Body of pancreas (tissue), 4 donors: ENCODE measurements at regions of chr7 and their contacts with region 1.

Region 1: DNA sequence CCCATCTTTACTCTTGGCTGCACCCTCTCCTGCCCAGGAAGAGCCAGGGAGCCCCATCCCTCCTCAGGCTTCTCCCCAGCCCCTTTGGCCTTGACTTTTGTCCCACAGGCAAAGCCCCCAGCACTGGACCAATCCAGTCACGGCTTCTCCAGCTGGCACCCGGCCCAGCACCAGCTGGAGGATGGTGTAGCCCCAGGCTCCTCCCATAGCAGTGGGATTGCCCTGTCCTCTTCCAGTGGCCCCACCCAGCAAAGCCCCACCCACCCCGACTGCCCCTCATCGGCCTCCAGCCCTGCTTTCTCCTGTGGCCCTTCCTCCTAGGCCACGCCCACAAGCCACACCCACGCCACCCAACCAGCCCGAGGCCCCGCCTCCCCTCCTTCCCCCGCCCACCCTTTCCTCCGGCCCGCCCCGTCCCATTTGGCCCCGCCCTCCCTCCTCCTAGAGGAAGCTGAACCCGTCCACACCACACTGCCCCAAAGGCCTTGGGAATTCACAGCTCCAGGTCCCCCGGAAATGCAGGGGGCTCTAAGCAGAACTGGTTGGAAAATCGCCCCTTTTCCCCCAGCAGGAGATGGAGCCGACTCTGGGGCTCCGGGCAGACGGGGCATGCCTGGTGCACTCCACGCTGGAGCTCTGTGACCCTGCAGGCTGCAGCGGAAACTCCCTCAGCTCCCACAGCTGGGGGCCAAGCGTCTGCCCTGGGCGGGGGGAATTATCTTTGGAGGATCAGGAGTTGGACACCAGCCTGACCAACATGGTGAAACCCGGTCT is 25.2 kb downstream of the GET4 start:
- DNase-seq: peak; percentile 64 to 89 (median 82)
- ATAC-seq: peak; percentile 49
- H3K4me3 ChIP-seq: no peak overlapping the region
- H3K27ac ChIP-seq: peak overlapping the region in 1 of 4 donors; percentile 34
- H3K4me1 ChIP-seq: peaks cover 9% of the 10 kb centered on the region
- H3K27me3 ChIP-seq: no peaks in the 10 kb centered on the region
- CTCF ChIP-seq: no peak
- POLR2A ChIP-seq: no peak

Region 2: GRCh38 chr7:867672-868486 is 33.7 kb before region 1 on chr7:
- intact Hi-C with region 1: no loop called
- DNase-seq: no peak
- ATAC-seq: peak; percentile 16
- H3K4me3 ChIP-seq: no peak overlapping the region
- H3K27ac ChIP-seq: peak overlapping the region in 3 of 4 donors; percentile 6 to 38 (median 25)
- H3K4me1 ChIP-seq: no peaks in the 10 kb centered on the region
- H3K27me3 ChIP-seq: no peaks in the 10 kb centered on the region
- CTCF ChIP-seq: no peak
- POLR2A ChIP-seq: no peak

Region 3: DNA sequence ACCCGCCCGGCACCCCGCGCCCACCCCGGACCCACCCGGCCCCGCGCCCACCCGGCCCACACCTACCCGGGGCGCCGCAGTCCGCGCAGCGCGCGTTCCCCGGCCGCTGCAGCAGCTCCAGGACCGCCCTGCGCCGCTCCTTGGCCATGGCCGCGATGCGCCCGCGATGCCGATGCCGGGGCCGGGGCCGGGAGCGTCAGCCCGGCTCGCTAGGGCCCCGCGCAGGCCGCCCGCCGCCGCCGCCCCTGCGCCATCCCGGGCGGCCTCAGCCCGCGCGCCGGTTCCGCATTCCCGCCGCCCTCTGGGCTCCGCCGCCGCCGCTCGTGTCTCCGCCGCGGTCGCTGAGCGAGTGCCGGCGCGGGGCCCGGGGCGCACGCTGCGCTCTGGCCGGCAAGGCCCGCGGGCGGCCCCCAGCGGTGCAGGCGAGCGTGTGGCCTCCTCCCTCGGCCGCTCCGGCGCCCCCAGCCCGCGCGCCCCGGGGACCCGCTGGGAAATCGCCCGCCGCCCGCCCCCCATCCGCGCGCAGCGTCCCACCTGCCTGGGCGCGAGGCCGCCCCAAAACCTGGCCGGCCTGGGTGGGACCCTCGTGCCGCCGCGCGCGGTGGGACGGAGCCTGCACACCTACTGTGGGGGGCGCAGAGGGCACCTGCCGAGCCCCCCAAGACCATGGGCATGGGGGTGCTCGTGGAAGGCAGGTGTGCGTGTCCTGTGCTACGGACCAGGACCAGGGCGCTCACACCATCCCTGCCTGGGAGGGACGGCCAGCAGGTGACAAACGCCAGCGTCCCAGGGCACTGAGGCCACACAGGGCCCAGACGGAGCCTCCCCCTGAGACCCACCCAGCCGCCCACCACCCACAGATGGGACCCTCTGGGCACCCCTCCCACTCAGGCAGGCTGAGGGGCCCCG is 53.0 kb after region 1 on chr7 and contains the start of gene ADAP1:
- intact Hi-C with region 1: no loop called
- DNase-seq: peak in 3 of 4 donors; percentile 51 to 62 (median 52)
- ATAC-seq: peak; percentile 60
- H3K4me3 ChIP-seq: peak within 1 kb of the TSS in 1 of 2 donors; percentile 43
- H3K27ac ChIP-seq: peak within 1 kb of the TSS in 1 of 4 donors; percentile 58
- H3K4me1 ChIP-seq: peaks cover 15% of the 10 kb centered on the region
- H3K27me3 ChIP-seq: no peaks in the 10 kb centered on the region
- CTCF ChIP-seq: peak in 4 of 7 experiments; percentile 5 to 54 (median 33)
- POLR2A ChIP-seq: no peak
- total RNA-seq, gene ADAP1: 19.7 to 19.8 TPM

Region 4: DNA sequence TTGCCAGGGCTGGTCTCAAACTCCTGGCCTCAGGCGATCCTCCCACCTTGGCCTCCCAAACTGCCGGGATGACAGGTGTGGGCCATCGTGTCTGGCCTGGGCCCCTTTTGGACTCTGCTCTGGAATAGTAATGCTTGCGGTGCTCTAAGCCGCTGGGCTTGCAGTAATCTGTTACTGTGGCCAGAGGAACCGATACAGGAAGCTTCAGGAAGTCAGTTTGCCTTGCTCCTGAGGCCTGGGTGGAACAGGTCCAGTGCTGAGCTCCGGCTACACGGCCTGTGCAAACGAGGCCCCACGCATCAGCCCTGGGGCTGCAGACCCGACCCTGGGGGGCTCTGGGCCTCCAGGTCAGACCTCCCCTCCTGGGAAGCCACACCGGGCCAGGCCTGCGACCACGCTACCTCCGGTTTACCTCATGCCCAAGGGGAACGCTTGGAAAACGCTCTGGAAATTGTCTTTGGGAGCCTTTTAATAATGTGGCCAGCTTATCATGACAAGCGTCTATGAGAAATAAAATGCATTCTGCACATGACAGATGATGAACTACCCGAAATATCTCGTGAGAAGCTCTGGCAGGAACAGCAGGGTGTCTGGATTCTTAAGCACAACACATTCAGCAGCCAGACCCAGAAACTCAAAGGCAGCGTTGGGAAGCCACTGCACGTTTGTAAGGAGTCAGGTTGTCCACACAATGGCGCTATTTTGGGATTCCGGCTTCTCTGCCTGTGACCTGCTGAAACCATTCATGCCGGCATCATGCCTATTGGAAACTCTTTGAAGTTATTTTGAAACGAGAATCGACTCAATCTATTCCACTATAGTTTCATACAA is 63.0 kb after region 1 on chr7:
- intact Hi-C with region 1: loop called (anchors 5 kb)
- DNase-seq: peak in 1 of 4 donors; percentile 48
- ATAC-seq: no peak
- H3K4me3 ChIP-seq: no peak overlapping the region
- H3K27ac ChIP-seq: peak overlapping the region in 1 of 4 donors; percentile 43
- H3K4me1 ChIP-seq: peaks cover 24% of the 10 kb centered on the region
- H3K27me3 ChIP-seq: no peaks in the 10 kb centered on the region
- CTCF ChIP-seq: no peak
- POLR2A ChIP-seq: no peak

Region 5: DNA sequence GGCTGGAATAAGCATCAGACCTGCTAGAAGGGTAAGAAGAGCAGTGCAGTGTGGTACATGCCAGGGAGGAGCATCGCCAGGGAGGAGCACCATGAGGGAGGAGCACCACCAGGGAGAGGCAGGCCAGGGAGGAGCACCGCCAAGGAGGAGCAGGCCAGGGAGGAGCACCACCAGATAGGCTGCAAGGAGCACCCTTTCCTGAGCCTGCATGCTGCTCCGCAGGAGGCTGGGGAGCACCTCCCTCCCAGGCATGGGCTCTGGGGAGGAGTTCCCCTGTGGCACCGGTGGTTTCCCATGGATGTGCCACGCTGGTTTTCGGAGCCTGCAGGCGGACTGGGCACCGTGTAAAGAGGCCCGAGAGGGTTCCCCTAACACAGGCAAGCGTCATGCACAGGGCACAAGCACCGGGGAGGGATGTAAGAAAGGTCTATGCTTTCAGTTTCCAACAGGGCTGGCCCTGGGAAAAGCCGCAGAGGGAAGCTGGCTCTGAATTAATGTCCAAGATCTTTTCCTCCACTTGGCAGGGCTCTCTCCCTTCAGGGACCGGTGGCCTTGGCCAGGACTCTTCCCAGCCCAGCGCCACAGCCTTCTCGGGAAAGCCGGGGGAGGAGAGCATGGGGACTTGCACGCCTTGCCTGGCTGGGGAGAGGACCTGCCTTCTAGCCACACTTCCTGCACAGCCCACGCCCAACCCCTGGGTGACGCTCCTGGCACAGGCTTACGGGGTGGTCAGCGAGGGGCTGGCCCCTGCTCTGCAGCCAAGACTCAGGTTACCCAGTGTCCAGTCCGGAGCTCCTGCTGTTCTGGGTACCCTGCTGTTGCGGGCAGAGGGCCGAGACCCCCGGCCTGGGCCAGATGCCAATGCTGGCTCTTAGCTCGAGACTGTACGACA is 174.9 kb after region 1 on chr7:
- intact Hi-C with region 1: loop called (anchors 10 kb)
- DNase-seq: peak; percentile 78 to 88 (median 86)
- ATAC-seq: peak; percentile 83
- H3K4me3 ChIP-seq: no peak overlapping the region
- H3K27ac ChIP-seq: peak overlapping the region; percentile 65 to 84 (median 76)
- H3K4me1 ChIP-seq: peaks cover 32% of the 10 kb centered on the region
- H3K27me3 ChIP-seq: no peaks in the 10 kb centered on the region
- CTCF ChIP-seq: peak in 2 of 7 experiments; percentile 15 to 16
- POLR2A ChIP-seq: peak in 1 of 3 donors; percentile 7